Ascending aorta (tissue), 2 donors: ENCODE measurements at regions of chr15 and their contacts with region 1.

Region 1: GRCh38 chr15:44286814-44287452 is 1.6 kb upstream of the GOLM2 start:
- DNase-seq: no peak
- H3K4me3 ChIP-seq: peak overlapping the region; percentile 80
- H3K27ac ChIP-seq: no peak overlapping the region
- H3K4me1 ChIP-seq: peaks cover 4 to 18% of the 10 kb centered on the region in 2 donors
- H3K27me3 ChIP-seq: no peaks in the 10 kb centered on the region
- CTCF ChIP-seq: no peak

Region 2: DNA sequence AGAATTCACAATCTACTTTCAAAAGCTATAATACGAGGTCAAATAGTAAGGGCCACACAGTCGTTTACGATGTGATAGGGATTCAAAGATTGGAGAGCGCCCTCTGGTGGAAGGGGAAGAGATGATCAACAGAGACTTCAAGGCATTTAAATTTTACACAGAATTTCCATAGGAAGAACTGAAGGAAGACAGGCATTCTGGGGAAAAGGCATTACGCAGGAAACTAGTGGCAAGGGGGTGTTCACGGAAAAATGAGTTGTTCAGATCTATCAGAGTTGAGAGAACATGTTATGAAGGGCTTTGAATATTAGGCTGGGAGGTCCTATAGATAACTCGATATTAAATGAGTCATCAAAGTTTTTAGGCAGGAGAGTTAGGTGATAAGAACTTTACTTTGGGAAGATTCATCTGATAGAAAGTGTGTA is 220.6 kb before region 1 on chr15:
- intact Hi-C with region 1: no loop called
- DNase-seq: peak in 1 of 2 donors; percentile 65
- H3K4me3 ChIP-seq: no peak overlapping the region
- H3K27ac ChIP-seq: no peak overlapping the region
- H3K4me1 ChIP-seq: no peaks in the 10 kb centered on the region
- H3K27me3 ChIP-seq: no peaks in the 10 kb centered on the region
- CTCF ChIP-seq: peak; percentile 41 to 76 (median 41)

Region 3: GRCh38 chr15:44195151-44195740 is 91.7 kb before region 1 on chr15 and contains the start of gene FRMD5:
- intact Hi-C with region 1: loop called (anchors 1 kb)
- DNase-seq: peak; percentile 55 to 89
- H3K4me3 ChIP-seq: peak within 1 kb of the TSS; percentile 66 to 74
- H3K27ac ChIP-seq: no peak within 1 kb of the TSS
- H3K4me1 ChIP-seq: peaks cover 6 to 13% of the 10 kb centered on the region in 2 donors
- H3K27me3 ChIP-seq: no peaks in the 10 kb centered on the region
- CTCF ChIP-seq: peak in 2 of 3 experiments; percentile 29
- total RNA-seq, gene FRMD5: not detected

Region 4: DNA sequence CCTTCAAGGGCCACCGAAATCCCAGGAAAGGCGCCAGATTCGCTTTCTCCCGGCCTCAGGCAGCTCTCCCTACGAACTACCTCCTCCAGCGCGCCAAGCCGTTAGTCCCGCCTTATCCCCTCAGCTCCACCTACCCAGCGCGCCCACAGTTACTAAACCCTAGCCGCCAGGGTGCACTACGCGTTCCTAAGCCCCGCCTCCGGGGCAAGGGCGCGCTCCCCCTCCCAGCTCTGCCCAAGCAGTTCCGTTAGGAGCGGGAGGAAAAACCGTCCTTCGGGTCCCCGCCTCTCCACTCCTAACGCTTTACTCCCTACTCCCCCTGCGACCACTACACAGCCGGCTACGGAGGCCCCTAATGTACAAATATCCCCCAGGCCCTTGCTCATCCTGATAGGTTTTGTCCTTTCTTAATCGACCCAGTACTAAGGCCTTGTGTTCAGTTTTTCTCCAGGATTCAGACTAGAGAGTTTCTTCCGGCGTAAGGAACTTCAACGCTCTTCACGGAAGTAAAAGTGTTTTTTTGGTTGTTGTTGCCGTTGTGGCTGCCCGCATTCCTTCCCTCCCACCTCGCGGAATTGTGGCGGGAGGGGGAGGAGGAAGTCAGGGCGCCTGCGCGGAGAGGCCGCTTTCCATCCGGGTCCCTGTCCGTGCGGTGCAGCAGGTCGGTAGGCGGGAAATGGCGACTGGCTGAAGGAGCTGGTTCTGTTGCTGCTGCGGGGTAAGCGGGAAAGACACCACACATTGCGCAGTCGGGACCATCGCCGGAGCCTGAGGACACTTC is 140.2 kb after region 1 on chr15 and contains the start of gene CTDSPL2:
- intact Hi-C with region 1: loop called (anchors 1 kb)
- DNase-seq: peak; percentile 92 to 99
- H3K4me3 ChIP-seq: peak within 1 kb of the TSS; percentile 81 to 84
- H3K27ac ChIP-seq: peak within 1 kb of the TSS; percentile 97
- H3K4me1 ChIP-seq: peaks cover 0 to 11% of the 10 kb centered on the region in 2 donors
- H3K27me3 ChIP-seq: no peaks in the 10 kb centered on the region
- CTCF ChIP-seq: peak in 1 of 3 experiments; percentile 44
- total RNA-seq, gene CTDSPL2: 2.6 TPM

Region 5: DNA sequence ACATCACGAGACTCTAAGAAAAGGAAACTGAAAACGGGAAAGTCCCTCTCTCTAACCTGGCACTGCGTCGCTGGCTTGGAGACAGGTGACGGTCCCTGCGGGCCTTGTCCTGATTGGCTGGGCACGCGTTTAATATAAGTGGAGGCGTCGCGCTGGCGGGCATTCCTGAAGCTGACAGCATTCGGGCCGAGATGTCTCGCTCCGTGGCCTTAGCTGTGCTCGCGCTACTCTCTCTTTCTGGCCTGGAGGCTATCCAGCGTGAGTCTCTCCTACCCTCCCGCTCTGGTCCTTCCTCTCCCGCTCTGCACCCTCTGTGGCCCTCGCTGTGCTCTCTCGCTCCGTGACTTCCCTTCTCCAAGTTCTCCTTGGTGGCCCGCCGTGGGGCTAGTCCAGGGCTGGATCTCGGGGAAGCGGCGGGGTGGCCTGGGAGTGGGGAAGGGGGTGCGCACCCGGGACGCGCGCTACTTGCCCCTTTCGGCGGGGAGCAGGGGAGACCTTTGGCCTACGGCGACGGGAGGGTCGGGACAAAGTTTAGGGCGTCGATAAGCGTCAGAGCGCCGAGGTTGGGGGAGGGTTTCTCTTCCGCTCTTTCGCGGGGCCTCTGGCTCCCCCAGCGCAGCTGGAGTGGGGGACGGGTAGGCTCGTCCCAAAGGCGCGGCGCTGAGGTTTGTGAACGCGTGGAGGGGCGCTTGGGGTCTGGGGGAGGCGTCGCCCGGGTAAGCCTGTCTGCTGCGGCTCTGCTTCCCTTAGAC is 424.6 kb after region 1 on chr15 and contains the start of gene B2M:
- intact Hi-C with region 1: loop called (anchors 5 kb)
- DNase-seq: peak; percentile 90 to 98
- H3K4me3 ChIP-seq: peak within 1 kb of the TSS; percentile 87 to 90
- H3K27ac ChIP-seq: peak within 1 kb of the TSS; percentile 97 to 99
- H3K4me1 ChIP-seq: peaks cover 4 to 15% of the 10 kb centered on the region in 2 donors
- H3K27me3 ChIP-seq: no peaks in the 10 kb centered on the region
- CTCF ChIP-seq: no peak
- total RNA-seq, gene B2M: 3,395 TPM

Region 6: GRCh38 chr15:45402162-45402954 is 1115.4 kb after region 1 on chr15:
- intact Hi-C with region 1: loop called (anchors 5 kb)
- DNase-seq: peak; percentile 80 to 97
- H3K4me3 ChIP-seq: peak overlapping the region; percentile 92 to 94
- H3K27ac ChIP-seq: peak overlapping the region; percentile 85 to 92
- H3K4me1 ChIP-seq: peaks cover 3 to 18% of the 10 kb centered on the region in 2 donors
- H3K27me3 ChIP-seq: no peaks in the 10 kb centered on the region
- CTCF ChIP-seq: peak in 1 of 3 experiments; percentile 14